ENCODE measurements at regions of chr1 and their contacts with region 1.

Region 1: DNA sequence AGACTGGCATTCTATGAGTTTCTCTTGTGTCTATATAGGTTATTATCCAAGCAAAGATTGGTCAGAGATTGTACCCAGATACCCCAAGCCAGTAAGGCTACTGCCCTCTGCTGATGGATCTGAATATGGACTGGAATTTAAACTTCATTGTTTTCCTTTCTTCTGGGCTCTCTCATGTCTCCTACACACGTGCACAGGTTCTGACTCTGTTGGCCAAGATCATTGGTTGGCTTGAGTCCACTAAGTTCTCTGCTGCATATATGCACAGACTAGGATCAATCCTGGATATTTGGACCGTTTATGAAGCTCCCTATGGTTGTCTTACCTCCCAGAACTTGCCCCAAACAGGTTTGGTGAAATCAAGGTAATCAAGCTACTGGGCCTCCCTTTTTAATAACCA is 69.7 kb downstream of the CC2D1B start:
- DNase-seq: no peak
- H3K4me3 ChIP-seq: no peak overlapping the region
- H3K27ac ChIP-seq: no peak overlapping the region
- H3K4me1 ChIP-seq: peaks cover 0 to 6% (median 2%) of the 10 kb centered on the region in 4 donors
- H3K27me3 ChIP-seq: no peaks in the 10 kb centered on the region
- CTCF ChIP-seq: peak; percentile 60 to 75 (median 65)
- EP300 ChIP-seq: no peak
- POLR2A ChIP-seq: no peak

Region 2: GRCh38 chr1:52127181-52128180 is 168.9 kb before region 1 on chr1:
- in situ Hi-C with region 1: loop called in 2 of 4 experiments (anchors 5 to 25 kb)
- intact Hi-C with region 1: loop called (anchors 5 kb)
- DNase-seq: peak; percentile 17
- H3K4me3 ChIP-seq: no peak overlapping the region
- H3K27ac ChIP-seq: no peak overlapping the region
- H3K4me1 ChIP-seq: no peaks in the 10 kb centered on the region
- H3K27me3 ChIP-seq: no peaks in the 10 kb centered on the region
- CTCF ChIP-seq: peak; percentile 48 to 66 (median 60)
- EP300 ChIP-seq: no peak
- POLR2A ChIP-seq: no peak